ENCODE measurements at regions of chr20 and their contacts with region 1.

Region 1: DNA sequence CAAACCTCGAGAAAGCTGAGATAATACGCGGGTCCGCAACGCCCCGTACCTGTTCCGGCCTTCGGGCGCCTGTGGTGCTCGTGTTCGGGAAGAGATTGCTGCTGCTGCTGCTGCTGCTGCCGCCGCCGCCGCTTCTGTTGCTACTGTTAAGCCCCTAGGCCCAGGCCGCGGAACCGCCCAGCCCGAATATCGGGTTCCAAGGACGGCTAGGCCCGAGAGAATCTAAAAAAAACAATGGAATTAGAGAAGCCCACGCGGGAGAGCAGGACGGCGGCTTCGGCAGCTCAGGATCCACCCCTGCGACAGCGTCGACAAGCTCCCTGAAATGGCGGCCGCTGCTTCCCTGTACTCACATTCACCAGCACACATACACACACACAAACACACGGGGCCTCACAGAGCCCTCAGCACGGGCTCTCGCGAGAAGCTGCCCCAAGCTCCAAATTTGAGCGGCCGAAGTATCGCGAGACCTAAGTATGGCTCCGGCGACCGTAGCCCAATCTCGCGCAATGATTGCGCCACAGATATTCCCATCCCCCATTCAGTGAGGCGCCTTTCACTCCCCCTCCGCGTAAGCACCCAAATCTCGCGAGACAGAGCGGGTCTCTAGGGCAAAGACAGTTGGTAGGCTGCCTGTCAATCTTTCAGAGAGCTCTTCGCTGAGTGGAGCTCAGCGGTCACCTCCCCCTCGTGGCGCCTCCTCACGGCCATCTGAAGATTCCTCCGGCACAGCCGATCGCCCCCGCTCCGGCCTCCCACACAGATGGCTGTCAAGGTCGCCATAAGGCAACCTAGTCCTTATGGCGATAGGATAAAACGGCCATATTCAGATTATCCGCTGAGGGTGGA is at the start of gene RBM39:
- DNase-seq: peak; percentile 97 to 100
- ATAC-seq: peak; percentile 75 to 94 (median 83)
- H3K4me3 ChIP-seq: peak within 1 kb of the TSS; percentile 98
- H3K4me3 Mint-ChIP-seq: peak within 1 kb of the TSS; percentile 99
- H3K27ac ChIP-seq: peak within 1 kb of the TSS; percentile 99
- H3K27ac Mint-ChIP-seq: peak within 1 kb of the TSS; percentile 98 to 99
- H3K4me1 ChIP-seq: peaks cover 41% of the 10 kb centered on the region
- H3K4me1 Mint-ChIP-seq: peaks cover 57 to 59% of the 10 kb centered on the region in 2 donors
- H3K27me3 ChIP-seq: no peaks in the 10 kb centered on the region
- H3K27me3 Mint-ChIP-seq: no peaks in the 10 kb centered on the region
- CTCF ChIP-seq: peak; percentile 23
- total RNA-seq, gene RBM39: 1,431 to 1,555 (median 1,445) TPM

Region 2: DNA sequence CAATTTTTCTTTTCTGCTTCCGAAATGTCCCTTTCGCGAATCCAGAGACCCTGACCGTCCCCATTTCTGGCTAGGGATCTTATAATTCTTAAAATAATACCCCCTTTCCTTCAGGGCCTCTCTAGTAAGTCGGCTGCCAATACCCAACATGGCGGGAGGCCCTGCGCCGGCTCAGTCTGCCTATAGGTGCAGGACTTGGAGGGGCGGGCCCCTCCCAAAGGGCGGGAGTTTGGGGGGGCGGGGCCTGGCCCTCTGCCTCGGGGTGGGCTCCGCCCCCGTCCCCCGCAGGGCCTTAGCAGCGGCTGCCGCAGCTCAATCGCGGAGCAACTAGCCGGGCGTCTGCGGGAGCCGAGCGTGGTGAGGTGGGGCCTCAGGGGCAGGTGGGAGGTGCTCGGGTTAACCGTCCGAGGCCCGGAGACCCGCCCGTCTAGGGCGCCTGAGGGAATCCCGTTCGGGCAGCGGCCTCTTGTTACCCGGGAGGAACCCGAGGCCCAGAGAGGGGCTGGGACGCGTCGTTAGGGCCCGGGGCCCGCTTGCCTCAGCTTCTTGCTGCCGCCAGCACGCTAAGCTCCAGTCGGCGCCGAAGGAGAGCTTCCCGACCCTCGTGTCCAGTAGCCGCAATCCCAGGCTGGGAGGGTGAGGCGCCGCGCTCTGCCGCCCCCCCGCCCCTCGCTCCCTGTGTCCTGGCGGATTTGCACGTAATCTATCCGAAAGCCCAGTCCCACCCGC is 287.1 kb before region 1 on chr20 and contains the start of gene CEP250:
- intact Hi-C with region 1: no loop called
- DNase-seq: peak; percentile 87 to 96
- ATAC-seq: peak; percentile 98 to 100 (median 99)
- H3K4me3 ChIP-seq: peak within 1 kb of the TSS; percentile 98
- H3K4me3 Mint-ChIP-seq: peak within 1 kb of the TSS; percentile 96
- H3K27ac ChIP-seq: peak within 1 kb of the TSS; percentile 100
- H3K27ac Mint-ChIP-seq: peak within 1 kb of the TSS; percentile 95
- H3K4me1 ChIP-seq: peaks cover 10% of the 10 kb centered on the region
- H3K4me1 Mint-ChIP-seq: peaks cover 0 to 5% of the 10 kb centered on the region in 2 donors
- H3K27me3 ChIP-seq: no peaks in the 10 kb centered on the region
- H3K27me3 Mint-ChIP-seq: no peaks in the 10 kb centered on the region
- CTCF ChIP-seq: no peak
- total RNA-seq, gene CEP250: 61.5 to 91.8 (median 80.8) TPM

Region 3: DNA sequence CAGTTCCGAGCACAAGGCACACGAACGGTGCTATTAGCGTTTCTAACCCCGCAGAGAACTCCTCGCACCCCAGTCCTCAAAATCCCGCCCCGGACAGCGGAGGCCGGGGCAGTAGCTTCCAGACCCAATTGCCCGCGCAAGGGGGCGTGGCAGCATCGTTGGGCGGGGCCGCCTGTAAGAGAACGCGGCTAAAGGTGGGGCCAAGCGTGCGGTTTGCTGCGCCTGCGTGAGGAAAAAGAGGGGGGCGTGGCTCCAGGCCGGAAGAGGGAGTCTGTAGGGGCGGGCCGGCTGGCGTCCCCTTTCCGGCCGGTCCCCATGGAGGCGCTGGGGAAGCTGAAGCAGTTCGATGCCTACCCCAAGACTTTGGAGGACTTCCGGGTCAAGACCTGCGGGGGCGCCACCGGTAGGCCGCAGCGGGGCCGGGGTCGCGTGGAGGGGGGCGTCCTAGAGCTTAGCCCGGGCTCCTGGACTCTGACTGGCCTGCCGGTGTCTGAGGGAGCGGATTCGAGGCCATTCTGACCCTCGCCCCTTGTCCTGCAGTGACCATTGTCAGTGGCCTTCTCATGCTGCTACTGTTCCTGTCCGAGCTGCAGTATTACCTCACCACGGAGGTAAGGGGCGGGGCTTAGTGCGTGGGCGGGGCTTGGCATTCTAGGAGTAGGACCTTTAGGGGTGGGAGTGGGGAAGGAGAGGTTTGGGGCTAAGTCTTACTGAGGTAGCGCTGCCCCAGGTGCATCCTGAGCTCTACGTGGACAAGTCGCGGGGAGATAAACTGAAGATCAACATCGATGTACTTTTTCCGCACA is 200.1 kb before region 1 on chr20 and contains the start of gene ERGIC3:
- intact Hi-C with region 1: loop called (anchors 5 kb)
- DNase-seq: peak; percentile 96 to 98
- ATAC-seq: peak; percentile 95 to 99 (median 96)
- H3K4me3 ChIP-seq: peak within 1 kb of the TSS; percentile 95
- H3K4me3 Mint-ChIP-seq: peak within 1 kb of the TSS; percentile 92
- H3K27ac ChIP-seq: peak within 1 kb of the TSS; percentile 89
- H3K27ac Mint-ChIP-seq: peak within 1 kb of the TSS; percentile 77 to 92
- H3K4me1 ChIP-seq: peaks cover 16% of the 10 kb centered on the region
- H3K4me1 Mint-ChIP-seq: peaks cover 9 to 15% of the 10 kb centered on the region in 2 donors
- H3K27me3 ChIP-seq: no peaks in the 10 kb centered on the region
- H3K27me3 Mint-ChIP-seq: no peaks in the 10 kb centered on the region
- CTCF ChIP-seq: no peak
- total RNA-seq, gene ERGIC3: 128 to 130 (median 129) TPM

Region 4: GRCh38 chr20:35619196-35620095 is 122.7 kb before region 1 on chr20:
- intact Hi-C with region 1: loop called (anchors 1 kb)
- DNase-seq: peak; percentile 71 to 90
- ATAC-seq: peak; percentile 18 to 22 (median 22)
- H3K4me3 ChIP-seq: peak overlapping the region; percentile 44
- H3K4me3 Mint-ChIP-seq: peak overlapping the region; percentile 86
- H3K27ac ChIP-seq: no peak overlapping the region
- H3K27ac Mint-ChIP-seq: peak overlapping the region; percentile 34 to 99
- H3K4me1 ChIP-seq: peaks cover 40% of the 10 kb centered on the region
- H3K4me1 Mint-ChIP-seq: peaks cover 23 to 45% of the 10 kb centered on the region in 2 donors
- H3K27me3 ChIP-seq: peaks cover 10% of the 10 kb centered on the region
- H3K27me3 Mint-ChIP-seq: peaks cover 0 to 2% of the 10 kb centered on the region in 2 donors
- CTCF ChIP-seq: peak; percentile 55

Region 5: GRCh38 chr20:35709259-35709658 is 32.9 kb before region 1 on chr20:
- intact Hi-C with region 1: loop called (anchors 5 kb)
- DNase-seq: no peak
- ATAC-seq: no peak
- H3K4me3 ChIP-seq: no peak overlapping the region
- H3K4me3 Mint-ChIP-seq: peak overlapping the region; percentile 2
- H3K27ac ChIP-seq: no peak overlapping the region
- H3K27ac Mint-ChIP-seq: peak overlapping the region; percentile 70 to 84
- H3K4me1 ChIP-seq: peaks cover 6% of the 10 kb centered on the region
- H3K4me1 Mint-ChIP-seq: peaks cover 35 to 45% of the 10 kb centered on the region in 2 donors
- H3K27me3 ChIP-seq: no peaks in the 10 kb centered on the region
- H3K27me3 Mint-ChIP-seq: no peaks in the 10 kb centered on the region
- CTCF ChIP-seq: no peak

Region 6: GRCh38 chr20:35771689-35772562 is 29.8 kb after region 1 on chr20 and contains the start of gene PHF20:
- intact Hi-C with region 1: loop called (anchors 1 kb)
- DNase-seq: peak; percentile 100
- ATAC-seq: peak; percentile 77 to 93 (median 80)
- H3K4me3 ChIP-seq: peak within 1 kb of the TSS; percentile 46
- H3K4me3 Mint-ChIP-seq: peak within 1 kb of the TSS; percentile 96
- H3K27ac ChIP-seq: peak within 1 kb of the TSS; percentile 99
- H3K27ac Mint-ChIP-seq: peak within 1 kb of the TSS; percentile 98 to 100
- H3K4me1 ChIP-seq: peaks cover 73% of the 10 kb centered on the region
- H3K4me1 Mint-ChIP-seq: peaks cover 65 to 70% of the 10 kb centered on the region in 2 donors
- H3K27me3 ChIP-seq: no peaks in the 10 kb centered on the region
- H3K27me3 Mint-ChIP-seq: no peaks in the 10 kb centered on the region
- CTCF ChIP-seq: no peak
- total RNA-seq, gene PHF20: 151 to 165 (median 161) TPM

Measured in natural killer cell (primary cell).